Upper lobe of right lung (tissue), 1 donor: ENCODE measurements at regions of chr12 and their contacts with region 1.

Region 1: GRCh38 chr12:6195665-6196535 is 4.3 kb upstream of the CD9 start:
- DNase-seq: peak; percentile 85
- ATAC-seq: peak; percentile 79
- H3K4me3 ChIP-seq: no peak overlapping the region
- H3K27ac ChIP-seq: peak overlapping the region; percentile 7
- H3K4me1 ChIP-seq: peaks cover 19% of the 10 kb centered on the region
- H3K27me3 ChIP-seq: no peaks in the 10 kb centered on the region
- CTCF ChIP-seq: peak; percentile 96

Region 2: GRCh38 chr12:6140651-6141447 is 55.1 kb before region 1 on chr12:
- intact Hi-C with region 1: no loop called
- DNase-seq: peak; percentile 60
- ATAC-seq: peak; percentile 90
- H3K4me3 ChIP-seq: no peak overlapping the region
- H3K27ac ChIP-seq: peak overlapping the region; percentile 79
- H3K4me1 ChIP-seq: peaks cover 32% of the 10 kb centered on the region
- H3K27me3 ChIP-seq: no peaks in the 10 kb centered on the region
- CTCF ChIP-seq: no peak

Region 3: DNA sequence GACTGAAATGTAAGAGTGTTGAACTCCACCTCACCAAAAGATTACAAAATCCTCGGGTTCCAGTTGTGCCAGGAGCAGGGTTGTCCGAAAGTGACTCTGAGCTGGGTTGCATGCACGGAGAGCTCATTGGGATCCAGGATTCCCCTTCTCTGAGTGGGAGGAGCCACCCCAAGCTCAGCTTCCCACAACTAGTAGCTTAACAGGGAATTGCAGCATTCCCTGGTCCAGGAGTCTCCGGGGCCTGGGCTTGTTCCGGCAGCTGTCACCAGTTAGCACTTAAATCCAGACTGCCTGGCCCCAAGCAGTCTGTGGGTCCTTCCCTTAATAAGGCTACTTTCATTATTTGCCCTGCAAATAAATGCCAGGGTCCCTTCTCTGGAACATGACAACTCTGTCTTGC is 54.4 kb after region 1 on chr12:
- intact Hi-C with region 1: no loop called
- DNase-seq: peak; percentile 37
- ATAC-seq: peak; percentile 59
- H3K4me3 ChIP-seq: no peak overlapping the region
- H3K27ac ChIP-seq: no peak overlapping the region
- H3K4me1 ChIP-seq: peaks cover 4% of the 10 kb centered on the region
- H3K27me3 ChIP-seq: no peaks in the 10 kb centered on the region
- CTCF ChIP-seq: no peak

Region 4: GRCh38 chr12:6280053-6280469 is 84.2 kb after region 1 on chr12:
- intact Hi-C with region 1: loop called (anchors 5 kb)
- DNase-seq: peak; percentile 79
- ATAC-seq: peak; percentile 49
- H3K4me3 ChIP-seq: no peak overlapping the region
- H3K27ac ChIP-seq: peak overlapping the region; percentile 95
- H3K4me1 ChIP-seq: peaks cover 26% of the 10 kb centered on the region
- H3K27me3 ChIP-seq: no peaks in the 10 kb centered on the region
- CTCF ChIP-seq: no peak